ENCODE measurements at regions of chrX and their contacts with region 1.

Region 1: DNA sequence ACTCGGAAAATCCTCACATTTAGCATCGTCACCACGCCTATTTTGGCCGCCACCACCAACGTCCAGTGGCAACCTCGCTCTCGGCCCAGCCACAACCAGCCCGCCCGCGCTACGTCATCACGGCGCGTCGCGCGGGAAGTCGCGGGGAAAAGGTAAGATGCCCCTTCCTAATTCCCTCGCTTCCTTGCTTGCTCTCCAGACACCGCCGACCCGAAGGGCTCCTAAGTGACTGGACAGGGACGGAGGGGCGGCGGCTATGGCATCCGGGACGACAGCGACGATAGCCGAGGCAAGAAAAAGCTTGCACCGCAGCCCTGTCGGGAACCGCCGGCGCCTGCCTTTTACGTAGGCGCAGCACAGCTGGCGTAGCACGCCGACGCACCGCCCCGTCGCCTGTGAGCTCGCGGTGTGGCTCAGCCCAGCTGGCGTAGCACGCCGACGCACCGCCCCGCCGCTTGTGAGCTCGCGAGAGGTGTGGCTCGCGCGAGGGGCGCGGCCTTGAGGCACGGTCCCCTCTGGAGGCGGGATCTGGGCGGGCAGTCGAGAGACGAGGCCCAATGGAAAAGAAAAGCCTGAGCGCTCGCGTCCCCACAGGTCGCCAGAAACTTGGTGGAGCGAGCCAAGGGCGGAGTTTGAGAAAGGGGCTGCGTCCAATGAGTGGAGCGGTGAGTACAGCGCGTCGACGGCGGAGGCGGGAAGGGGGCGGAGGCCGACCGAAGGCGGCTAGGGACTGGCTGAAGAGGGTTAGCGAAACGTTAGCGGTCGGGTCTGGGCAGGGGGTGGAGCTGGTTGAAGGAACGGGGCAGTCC is at the start of gene HDAC6:
- DNase-seq: peak; percentile 85
- ATAC-seq: peak; percentile 80
- H3K4me3 Mint-ChIP-seq: peak within 1 kb of the TSS; percentile 94
- H3K27ac Mint-ChIP-seq: peak within 1 kb of the TSS; percentile 98
- H3K4me1 Mint-ChIP-seq: peaks cover 18% of the 10 kb centered on the region
- H3K27me3 Mint-ChIP-seq: no peaks in the 10 kb centered on the region
- CTCF ChIP-seq: no peak
- total RNA-seq, gene HDAC6: 139 and 144 TPM in 2 replicates

Region 2: GRCh38 chrX:48508400-48509244 is 292.9 kb before region 1 on chrX and contains the start of gene PORCN:
- CTCF ChIA-PET with region 1: no interaction called
- POLR2A ChIA-PET with region 1: no interaction called
- intact Hi-C with region 1: loop called (anchors 1 kb)
- DNase-seq: peak; percentile 65
- ATAC-seq: peak; percentile 88
- H3K4me3 Mint-ChIP-seq: peak within 1 kb of the TSS; percentile 91
- H3K27ac Mint-ChIP-seq: peak within 1 kb of the TSS; percentile 91
- H3K4me1 Mint-ChIP-seq: peaks cover 11% of the 10 kb centered on the region
- H3K27me3 Mint-ChIP-seq: no peaks in the 10 kb centered on the region
- CTCF ChIP-seq: no peak
- total RNA-seq, gene PORCN: 7.8 and 9.8 TPM in 2 replicates

Region 3: GRCh38 chrX:48648336-48648751 is 153.1 kb before region 1 on chrX:
- CTCF ChIA-PET with region 1: interaction called, 4 read pairs
- POLR2A ChIA-PET with region 1: interaction called, 4 read pairs
- intact Hi-C with region 1: loop called (anchors 1 kb)
- DNase-seq: no peak
- ATAC-seq: peak; percentile 65
- H3K4me3 Mint-ChIP-seq: no peak overlapping the region
- H3K27ac Mint-ChIP-seq: no peak overlapping the region
- H3K4me1 Mint-ChIP-seq: peaks cover 2% of the 10 kb centered on the region
- H3K27me3 Mint-ChIP-seq: no peaks in the 10 kb centered on the region
- CTCF ChIP-seq: no peak

Region 4: DNA sequence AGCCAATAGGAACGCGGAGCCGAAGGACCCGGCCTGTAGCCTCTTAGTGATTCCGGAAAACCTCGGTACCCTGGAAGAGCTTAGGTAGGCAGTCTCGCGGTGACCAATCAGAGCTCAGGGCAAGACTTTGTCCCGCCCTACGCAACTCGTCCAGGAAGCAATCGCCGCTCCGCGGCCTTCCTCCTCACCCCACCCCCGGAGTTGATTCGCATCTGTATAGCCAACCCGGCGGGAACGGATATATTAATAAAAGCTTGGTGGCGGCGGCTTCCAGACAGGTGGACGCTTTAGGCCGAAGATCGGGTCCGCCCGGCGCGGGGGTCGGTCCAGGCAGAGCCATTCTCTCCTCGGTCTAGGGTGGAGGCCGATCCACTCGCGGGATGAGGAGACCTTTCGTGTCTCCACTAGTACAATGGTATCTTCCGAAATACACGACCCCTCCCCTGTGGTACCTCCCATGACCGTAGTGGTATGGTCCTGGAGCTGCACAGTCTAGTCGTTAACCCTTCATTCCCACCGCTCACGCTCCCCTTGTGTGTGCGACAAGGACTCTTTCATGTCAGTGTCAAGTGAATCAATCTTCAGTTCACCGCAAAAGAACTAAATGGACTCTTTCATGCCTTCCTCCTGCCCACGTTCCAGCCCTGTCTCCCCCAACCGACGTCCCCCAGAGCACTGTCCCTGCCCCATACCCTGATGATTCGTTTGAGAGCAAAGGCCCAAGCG is 64.1 kb before region 1 on chrX:
- CTCF ChIA-PET with region 1: no interaction called
- POLR2A ChIA-PET with region 1: interaction called, 23 read pairs
- intact Hi-C with region 1: loop called (anchors 1 kb)
- DNase-seq: peak; percentile 65
- ATAC-seq: peak; percentile 97
- H3K4me3 Mint-ChIP-seq: peak overlapping the region; percentile 91
- H3K27ac Mint-ChIP-seq: peak overlapping the region; percentile 94
- H3K4me1 Mint-ChIP-seq: peaks cover 15% of the 10 kb centered on the region
- H3K27me3 Mint-ChIP-seq: no peaks in the 10 kb centered on the region
- CTCF ChIP-seq: no peak

Region 5: GRCh38 chrX:48937054-48937907 is 135.8 kb after region 1 on chrX:
- CTCF ChIA-PET with region 1: no interaction called
- POLR2A ChIA-PET with region 1: interaction called, 13 read pairs
- intact Hi-C with region 1: no loop called
- DNase-seq: peak; percentile 68
- ATAC-seq: peak; percentile 54
- H3K4me3 Mint-ChIP-seq: peak overlapping the region; percentile 77
- H3K27ac Mint-ChIP-seq: peak overlapping the region; percentile 98
- H3K4me1 Mint-ChIP-seq: peaks cover 87% of the 10 kb centered on the region
- H3K27me3 Mint-ChIP-seq: no peaks in the 10 kb centered on the region
- CTCF ChIP-seq: no peak

Region 6: DNA sequence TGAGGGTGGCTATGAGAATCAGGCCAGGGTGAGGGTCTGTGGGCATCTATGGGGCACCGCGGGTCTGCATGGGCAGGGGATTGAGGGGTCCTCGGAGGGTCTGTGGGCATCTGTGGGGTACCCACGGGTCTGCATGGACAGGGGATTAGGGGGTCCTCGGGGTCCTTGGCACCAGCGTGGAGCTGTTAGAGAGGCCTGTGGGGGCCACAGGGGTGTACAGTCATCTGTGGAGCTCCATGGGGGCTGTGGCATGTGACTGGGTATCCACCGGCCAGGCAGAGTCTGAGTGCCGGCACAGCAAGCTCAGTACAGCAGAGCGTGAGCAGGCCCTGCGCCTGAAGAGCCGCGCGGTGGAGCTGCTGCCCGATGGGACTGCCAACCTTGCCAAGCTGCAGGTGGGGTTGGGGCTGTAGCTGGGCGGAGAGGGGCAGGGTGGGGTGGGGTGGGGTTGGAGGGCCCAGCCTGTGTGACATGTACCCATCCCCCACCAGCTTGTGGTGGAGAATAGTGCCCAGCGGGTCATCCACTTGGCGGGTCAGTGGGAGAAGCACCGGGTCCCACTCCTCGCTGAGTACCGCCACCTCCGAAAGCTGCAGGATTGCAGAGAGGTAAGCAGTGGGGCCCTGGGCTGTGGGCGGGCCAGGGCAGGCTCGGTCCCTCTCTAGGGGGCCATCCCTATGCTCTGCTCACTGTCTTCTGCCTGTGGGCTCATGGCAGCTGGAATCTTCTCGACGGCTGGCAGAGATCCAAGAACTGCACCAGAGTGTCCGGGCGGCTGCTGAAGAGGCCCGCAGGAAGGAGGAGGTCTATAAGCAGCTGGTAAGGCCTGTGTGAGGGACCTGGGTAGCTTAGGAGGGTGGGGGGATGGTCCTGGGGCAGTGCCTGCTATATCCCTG is 446.7 kb after region 1 on chrX:
- CTCF ChIA-PET with region 1: no interaction called
- POLR2A ChIA-PET with region 1: no interaction called
- intact Hi-C with region 1: no loop called
- DNase-seq: no peak
- ATAC-seq: no peak
- H3K4me3 Mint-ChIP-seq: no peak overlapping the region
- H3K27ac Mint-ChIP-seq: no peak overlapping the region
- H3K4me1 Mint-ChIP-seq: no peaks in the 10 kb centered on the region
- H3K27me3 Mint-ChIP-seq: no peaks in the 10 kb centered on the region
- CTCF ChIP-seq: no peak